Activated B cell treated with CpG ODN at 0.5 μM for 24 hours (primary cell): ENCODE measurements at regions of chr15 and their contacts with region 1.

Region 1: GRCh38 chr15:82999905-83000671 is 11.4 kb downstream of the C15orf40 start:
- DNase-seq: no peak
- ATAC-seq: peak; percentile 85
- H3K4me3 Mint-ChIP-seq: peak overlapping the region; percentile 72
- H3K27ac Mint-ChIP-seq: peak overlapping the region; percentile 47
- H3K4me1 Mint-ChIP-seq: peaks cover 7% of the 10 kb centered on the region
- H3K27me3 Mint-ChIP-seq: no peaks in the 10 kb centered on the region
- CTCF ChIP-seq: no peak

Region 2: DNA sequence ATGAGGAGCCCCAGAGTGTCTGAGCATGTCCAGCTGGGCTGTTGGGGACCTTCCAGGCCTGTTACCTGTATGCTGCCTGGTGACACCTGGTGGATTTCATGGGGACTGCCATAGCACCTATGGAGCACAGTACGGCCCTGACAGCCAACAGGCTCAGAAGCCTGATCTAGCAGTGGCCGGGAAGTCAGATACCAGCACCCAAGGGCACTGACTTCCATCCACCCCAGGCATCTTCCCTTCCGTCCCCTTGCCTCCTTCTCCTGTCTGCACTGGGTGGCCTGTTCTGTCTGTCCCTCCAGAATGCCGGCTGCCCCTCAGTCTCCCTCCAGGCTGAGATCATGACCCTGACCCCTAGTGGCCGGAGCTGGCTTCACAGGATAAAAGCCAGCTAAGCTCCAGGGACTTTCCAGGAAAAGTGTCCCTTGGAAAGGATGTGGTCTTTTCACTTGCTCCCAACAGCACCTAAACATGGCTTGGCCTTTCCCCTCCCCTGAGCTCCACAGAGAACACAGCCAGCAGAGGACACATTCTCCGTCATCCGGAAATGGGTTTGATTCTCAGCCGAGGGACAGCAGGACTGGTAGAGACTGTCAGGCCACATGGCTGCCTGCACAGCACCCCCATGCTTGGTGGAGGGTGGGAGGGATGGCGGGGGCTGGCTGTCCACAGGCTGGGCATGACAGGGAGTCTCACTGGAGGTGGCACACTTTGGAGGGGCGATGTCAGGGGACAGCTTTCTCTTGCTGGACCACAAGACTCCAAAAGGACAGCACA is 469.3 kb before region 1 on chr15:
- CTCF ChIA-PET with region 1: interaction called, 17 read pairs
- POLR2A ChIA-PET with region 1: no interaction called
- intact Hi-C with region 1: no loop called
- DNase-seq: peak; percentile 65
- ATAC-seq: peak; percentile 96
- H3K4me3 Mint-ChIP-seq: peak overlapping the region; percentile 69
- H3K27ac Mint-ChIP-seq: peak overlapping the region; percentile 16
- H3K4me1 Mint-ChIP-seq: peaks cover 7% of the 10 kb centered on the region
- H3K27me3 Mint-ChIP-seq: no peaks in the 10 kb centered on the region
- CTCF ChIP-seq: no peak

Region 3: GRCh38 chr15:82849556-82850512 is 150.3 kb before region 1 on chr15:
- CTCF ChIA-PET with region 1: interaction called, 28 read pairs
- POLR2A ChIA-PET with region 1: interaction called, 4 read pairs
- intact Hi-C with region 1: loop called (anchors 1 kb)
- DNase-seq: no peak
- ATAC-seq: peak; percentile 28
- H3K4me3 Mint-ChIP-seq: peak overlapping the region; percentile 28
- H3K27ac Mint-ChIP-seq: no peak overlapping the region
- H3K4me1 Mint-ChIP-seq: peaks cover 25% of the 10 kb centered on the region
- H3K27me3 Mint-ChIP-seq: no peaks in the 10 kb centered on the region
- CTCF ChIP-seq: no peak

Region 4: DNA sequence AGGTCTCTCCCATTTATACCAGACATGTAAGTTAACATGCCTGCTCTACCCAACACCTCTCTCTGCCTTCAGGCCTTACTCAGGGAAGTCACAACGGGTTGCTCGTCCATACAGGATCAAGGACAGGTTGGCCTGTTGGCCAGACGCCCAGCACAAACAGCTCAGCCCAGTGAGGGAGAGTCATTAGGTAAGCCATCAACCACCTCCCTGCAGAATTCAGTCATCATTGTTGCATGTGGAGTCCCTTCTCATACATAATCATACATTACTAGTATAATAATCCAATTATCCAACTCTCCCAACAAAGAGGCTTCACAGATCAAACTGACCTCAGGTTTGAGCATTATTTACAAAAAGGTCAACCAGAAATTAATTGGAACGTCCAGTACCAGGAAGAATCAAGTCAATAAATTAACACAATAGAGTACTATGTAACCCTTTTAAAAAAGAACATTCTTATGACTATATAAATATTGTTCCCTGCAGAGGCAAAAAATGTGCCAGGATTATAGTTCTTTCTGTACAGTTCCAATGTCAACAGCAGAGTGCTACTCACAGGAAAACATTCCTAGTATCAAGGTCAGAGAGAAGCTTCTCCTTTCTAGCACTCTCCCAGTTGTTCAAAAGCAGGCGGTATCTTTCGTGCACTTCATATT is 80.7 kb before region 1 on chr15:
- CTCF ChIA-PET with region 1: no interaction called
- POLR2A ChIA-PET with region 1: no interaction called
- intact Hi-C with region 1: no loop called
- DNase-seq: no peak
- ATAC-seq: no peak
- H3K4me3 Mint-ChIP-seq: no peak overlapping the region
- H3K27ac Mint-ChIP-seq: no peak overlapping the region
- H3K4me1 Mint-ChIP-seq: no peaks in the 10 kb centered on the region
- H3K27me3 Mint-ChIP-seq: no peaks in the 10 kb centered on the region
- CTCF ChIP-seq: no peak